ENCODE measurements at regions of chr11 and their contacts with region 1.

Region 1: GRCh38 chr11:9314291-9315036 is at the start of gene TMEM41B:
- DNase-seq: peak; percentile 98
- H3K4me3 ChIP-seq: peak within 1 kb of the TSS; percentile 95 to 100
- H3K27ac ChIP-seq: peak within 1 kb of the TSS; percentile 88 to 91
- H3K4me1 ChIP-seq: peaks cover 9% of the 10 kb centered on the region
- H3K27me3 ChIP-seq: no peaks in the 10 kb centered on the region
- CTCF ChIP-seq: no peak
- POLR2A ChIP-seq: no peak
- total RNA-seq, gene TMEM41B: 37.5 to 42.6 TPM

Region 2: GRCh38 chr11:9460322-9461067 is 146.0 kb after region 1 on chr11 and contains the start of gene ZNF143:
- intact Hi-C with region 1: loop called (anchors 2 kb)
- DNase-seq: peak; percentile 100
- H3K4me3 ChIP-seq: peak within 1 kb of the TSS; percentile 87 to 94
- H3K27ac ChIP-seq: peak within 1 kb of the TSS; percentile 97 to 100
- H3K4me1 ChIP-seq: peaks cover 7% of the 10 kb centered on the region
- H3K27me3 ChIP-seq: no peaks in the 10 kb centered on the region
- CTCF ChIP-seq: peak in 2 of 3 experiments; percentile 29 to 63
- POLR2A ChIP-seq: peak; percentile 90
- total RNA-seq, gene ZNF143: 37.2 to 49.9 TPM